ENCODE measurements at regions of chr20 and their contacts with region 1.

Region 1: GRCh38 chr20:31869942-31870725 is at the starts of genes DUSP15 and TTLL9:
- DNase-seq: peak in 3 of 5 donors; percentile 43 to 55 (median 52)
- ATAC-seq: peak; percentile 51 to 92 (median 86)
- H3K4me3 ChIP-seq: peak within 1 kb of the TSS; percentile 46 to 96 (median 66)
- H3K27ac ChIP-seq: peak within 1 kb of the TSS in 7 of 12 donors; percentile 3 to 76 (median 57)
- H3K4me1 ChIP-seq: peaks cover 0 to 20% (median 11%) of the 10 kb centered on the region in 12 donors
- H3K27me3 ChIP-seq: peaks cover 0 to 27% (median 0%) of the 10 kb centered on the region in 9 donors
- CTCF ChIP-seq: peak in 2 of 12 donors; percentile 4 to 6
- POLR2A ChIP-seq: no peak
- total RNA-seq, gene DUSP15: 1.0 to 7.4 (median 3.0) TPM
- total RNA-seq, gene TTLL9: not detected

Region 2: GRCh38 chr20:31908016-31908415 is 37.9 kb after region 1 on chr20:
- intact Hi-C with region 1: loop called in 1 of 10 experiments (anchors 5 kb)
- DNase-seq: no peak
- ATAC-seq: no peak
- H3K4me3 ChIP-seq: no peak overlapping the region
- H3K27ac ChIP-seq: no peak overlapping the region
- H3K4me1 ChIP-seq: no peaks in the 10 kb centered on the region
- H3K27me3 ChIP-seq: no peaks in the 10 kb centered on the region
- CTCF ChIP-seq: no peak
- POLR2A ChIP-seq: no peak

Region 3: GRCh38 chr20:31951530-31952453 is 81.7 kb after region 1 on chr20 and contains the start of gene PDRG1:
- intact Hi-C with region 1: loop called in 1 of 10 experiments (anchors 5 kb)
- DNase-seq: peak; percentile 94 to 98 (median 96)
- ATAC-seq: peak; percentile 96 to 99 (median 98)
- H3K4me3 ChIP-seq: peak within 1 kb of the TSS; percentile 65 to 100 (median 94)
- H3K27ac ChIP-seq: peak within 1 kb of the TSS in 11 of 12 donors; percentile 69 to 95 (median 85)
- H3K4me1 ChIP-seq: peaks cover 0 to 20% (median 15%) of the 10 kb centered on the region in 12 donors
- H3K27me3 ChIP-seq: peaks cover 0 to 8% (median 0%) of the 10 kb centered on the region in 9 donors
- CTCF ChIP-seq: peak; percentile 93 to 99 (median 97)
- POLR2A ChIP-seq: peak in 1 of 2 donors; percentile 89
- total RNA-seq, gene PDRG1: 5.2 to 10.7 (median 7.3) TPM

Measured in heart left ventricle (tissue), 16 donors.